ENCODE measurements at regions of chr10 and their contacts with region 1.

Region 1: GRCh38 chr10:62811159-62811875 is 4.8 kb downstream of the EGR2 start:
- DNase-seq: no peak
- H3K4me3 ChIP-seq: no peak overlapping the region
- H3K27ac ChIP-seq: no peak overlapping the region
- H3K4me1 ChIP-seq: peaks cover 15% of the 10 kb centered on the region
- H3K27me3 ChIP-seq: no peaks in the 10 kb centered on the region
- CTCF ChIP-seq: no peak

Region 2: GRCh38 chr10:62323751-62324150 is 487.6 kb before region 1 on chr10:
- CTCF ChIA-PET with region 1: no interaction called
- POLR2A ChIA-PET with region 1: no interaction called
- intact Hi-C with region 1: no loop called
- DNase-seq: peak; percentile 47 to 95
- H3K4me3 ChIP-seq: no peak overlapping the region
- H3K27ac ChIP-seq: peak overlapping the region; percentile 15; the same call in 1 of the 2 replicates
- H3K4me1 ChIP-seq: peaks cover 11% of the 10 kb centered on the region
- H3K27me3 ChIP-seq: no peaks in the 10 kb centered on the region
- CTCF ChIP-seq: no peak

Region 3: GRCh38 chr10:62980687-62981086 is 169.4 kb after region 1 on chr10:
- CTCF ChIA-PET with region 1: interaction called, 10 read pairs
- POLR2A ChIA-PET with region 1: no interaction called
- intact Hi-C with region 1: no loop called
- DNase-seq: no peak
- H3K4me3 ChIP-seq: no peak overlapping the region
- H3K27ac ChIP-seq: no peak overlapping the region
- H3K4me1 ChIP-seq: peaks cover 14% of the 10 kb centered on the region
- H3K27me3 ChIP-seq: no peaks in the 10 kb centered on the region
- CTCF ChIP-seq: no peak

Region 4: GRCh38 chr10:63227207-63227915 is 416.0 kb after region 1 on chr10:
- CTCF ChIA-PET with region 1: no interaction called
- POLR2A ChIA-PET with region 1: interaction called, 15 read pairs
- intact Hi-C with region 1: no loop called
- DNase-seq: no peak
- H3K4me3 ChIP-seq: no peak overlapping the region
- H3K27ac ChIP-seq: no peak overlapping the region
- H3K4me1 ChIP-seq: no peaks in the 10 kb centered on the region
- H3K27me3 ChIP-seq: no peaks in the 10 kb centered on the region
- CTCF ChIP-seq: no peak